T-cell (primary cell): ENCODE measurements at regions of chr12 and their contacts with region 1.

Region 1: GRCh38 chr12:42012095-42012494 is 132.6 kb downstream of the GXYLT1 start:
- DNase-seq: no peak
- ATAC-seq: no peak
- H3K4me3 ChIP-seq: no peak overlapping the region
- H3K4me3 Mint-ChIP-seq: no peak overlapping the region
- H3K27ac ChIP-seq: no peak overlapping the region
- H3K27ac Mint-ChIP-seq: no peak overlapping the region
- H3K4me1 ChIP-seq: no peaks in the 10 kb centered on the region
- H3K4me1 Mint-ChIP-seq: no peaks in the 10 kb centered on the region
- H3K27me3 ChIP-seq: no peaks in the 10 kb centered on the region
- H3K27me3 Mint-ChIP-seq: peaks cover 3 to 4% of the 10 kb centered on the region in 2 donors

Region 2: GRCh38 chr12:41784957-41785356 is 227.1 kb before region 1 on chr12:
- CTCF ChIA-PET with region 1: no interaction called
- POLR2A ChIA-PET with region 1: no interaction called
- DNase-seq: no peak
- ATAC-seq: no peak
- H3K4me3 ChIP-seq: no peak overlapping the region
- H3K4me3 Mint-ChIP-seq: no peak overlapping the region
- H3K27ac ChIP-seq: no peak overlapping the region
- H3K27ac Mint-ChIP-seq: no peak overlapping the region
- H3K4me1 ChIP-seq: no peaks in the 10 kb centered on the region
- H3K4me1 Mint-ChIP-seq: no peaks in the 10 kb centered on the region
- H3K27me3 ChIP-seq: no peaks in the 10 kb centered on the region
- H3K27me3 Mint-ChIP-seq: peaks cover 0 to 2% of the 10 kb centered on the region in 2 donors

Region 3: DNA sequence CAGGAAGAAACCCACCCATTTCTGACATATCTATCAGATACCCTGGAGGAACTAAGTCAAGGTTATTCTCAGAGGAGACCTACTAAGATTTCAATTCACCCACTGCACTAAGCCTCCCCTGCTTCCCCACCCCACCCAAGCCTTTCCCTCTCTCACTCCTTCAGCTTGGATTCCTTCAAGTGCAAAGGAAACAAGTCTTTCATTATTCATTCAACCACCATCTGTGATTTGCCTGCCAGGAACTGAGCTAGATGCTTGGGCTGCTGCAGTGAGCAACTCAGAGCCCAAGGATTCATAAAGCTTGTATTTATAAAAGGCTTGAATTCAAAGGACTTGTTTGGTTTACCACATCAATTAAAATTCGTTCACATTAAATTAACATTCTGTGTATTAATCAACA is 28.7 kb before region 1 on chr12:
- CTCF ChIA-PET with region 1: no interaction called
- POLR2A ChIA-PET with region 1: no interaction called
- DNase-seq: no peak
- ATAC-seq: no peak
- H3K4me3 ChIP-seq: no peak overlapping the region
- H3K4me3 Mint-ChIP-seq: no peak overlapping the region
- H3K27ac ChIP-seq: no peak overlapping the region
- H3K27ac Mint-ChIP-seq: no peak overlapping the region
- H3K4me1 ChIP-seq: no peaks in the 10 kb centered on the region
- H3K4me1 Mint-ChIP-seq: no peaks in the 10 kb centered on the region
- H3K27me3 ChIP-seq: peaks cover 0 to 3% of the 10 kb centered on the region in 2 experiments
- H3K27me3 Mint-ChIP-seq: peaks cover 17 to 25% of the 10 kb centered on the region in 2 donors

Region 4: GRCh38 chr12:42023733-42024494 is 11.8 kb after region 1 on chr12:
- CTCF ChIA-PET with region 1: interaction called, 7 to 19 read pairs
- POLR2A ChIA-PET with region 1: no interaction called
- DNase-seq: peak; percentile 24 to 78 (median 57)
- ATAC-seq: peak; percentile 81 to 91 (median 82)
- H3K4me3 ChIP-seq: peak overlapping the region in 1 of 2 donors; percentile 13
- H3K4me3 Mint-ChIP-seq: peak overlapping the region; percentile 59 to 72 (median 63)
- H3K27ac ChIP-seq: no peak overlapping the region
- H3K27ac Mint-ChIP-seq: no peak overlapping the region
- H3K4me1 ChIP-seq: peaks cover 0 to 6% of the 10 kb centered on the region in 2 experiments
- H3K4me1 Mint-ChIP-seq: peaks cover 8 to 13% (median 9%) of the 10 kb centered on the region in 3 donors
- H3K27me3 ChIP-seq: peaks cover 0 to 7% of the 10 kb centered on the region in 2 experiments
- H3K27me3 Mint-ChIP-seq: peaks cover 0 to 10% of the 10 kb centered on the region in 2 donors

Region 5: GRCh38 chr12:42039176-42039575 is 27.1 kb after region 1 on chr12:
- CTCF ChIA-PET with region 1: no interaction called
- POLR2A ChIA-PET with region 1: no interaction called
- DNase-seq: no peak
- ATAC-seq: no peak
- H3K4me3 ChIP-seq: no peak overlapping the region
- H3K4me3 Mint-ChIP-seq: no peak overlapping the region
- H3K27ac ChIP-seq: no peak overlapping the region
- H3K27ac Mint-ChIP-seq: no peak overlapping the region
- H3K4me1 ChIP-seq: no peaks in the 10 kb centered on the region
- H3K4me1 Mint-ChIP-seq: no peaks in the 10 kb centered on the region
- H3K27me3 ChIP-seq: no peaks in the 10 kb centered on the region
- H3K27me3 Mint-ChIP-seq: peaks cover 9 to 16% of the 10 kb centered on the region in 2 donors